Heart left ventricle (tissue), 16 donors: ENCODE measurements at regions of chr7 and their contacts with region 1.

Region 1: DNA sequence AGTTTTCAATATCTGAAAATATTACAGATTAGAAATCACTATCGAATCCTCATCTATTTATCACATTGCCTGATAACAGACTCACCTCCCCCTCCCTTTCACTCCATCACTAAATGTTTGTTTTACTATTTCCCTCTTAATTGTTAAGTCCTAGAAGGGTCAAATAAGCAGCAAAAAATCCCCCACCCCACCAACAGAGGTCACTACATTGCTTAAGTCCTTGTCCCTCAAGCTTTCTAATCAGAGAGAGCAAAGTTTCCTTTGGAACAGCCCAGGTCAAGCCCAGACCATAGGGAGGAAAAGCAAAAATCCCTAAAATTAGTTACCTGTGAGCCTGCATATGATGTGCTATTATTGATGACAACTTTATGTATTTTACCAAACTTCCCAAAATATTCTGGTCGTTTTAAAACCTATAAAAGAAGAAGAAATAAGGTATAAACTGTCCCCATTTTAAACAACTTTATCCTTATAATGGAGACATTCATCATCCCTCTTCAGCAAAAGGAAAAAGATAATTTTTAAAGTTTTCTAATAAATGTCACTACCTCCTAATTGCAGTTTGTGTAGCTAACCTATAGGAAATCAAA is 95.0 kb downstream of the CNOT4 start:
- DNase-seq: peak in 1 of 5 donors; percentile 22
- ATAC-seq: no peak
- H3K4me3 ChIP-seq: no peak overlapping the region
- H3K27ac ChIP-seq: no peak overlapping the region
- H3K4me1 ChIP-seq: no peaks in the 10 kb centered on the region
- H3K27me3 ChIP-seq: no peaks in the 10 kb centered on the region
- CTCF ChIP-seq: peak in 9 of 12 donors; percentile 10 to 46 (median 40)
- POLR2A ChIP-seq: no peak

Region 2: DNA sequence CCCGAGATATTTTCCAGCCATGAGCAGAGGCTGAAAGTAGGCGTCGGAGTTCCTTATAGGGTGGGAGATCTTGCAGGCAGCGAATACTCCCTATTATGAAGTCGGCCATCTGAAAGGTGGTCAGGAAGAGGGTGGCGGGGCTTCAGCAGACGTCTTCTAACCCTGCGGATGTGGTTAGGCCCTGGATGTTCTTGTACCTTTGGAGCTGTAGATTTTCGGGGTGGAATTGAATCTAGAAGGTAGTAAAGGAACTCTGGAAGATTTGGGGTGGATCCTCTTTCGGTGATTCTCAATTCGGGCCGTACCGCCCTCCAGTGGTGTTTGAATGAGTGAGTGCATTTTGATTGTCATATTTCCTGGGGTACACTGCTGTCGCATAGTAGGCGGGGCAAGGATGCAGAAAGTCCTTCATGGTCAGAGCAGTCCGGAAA is 143.4 kb after region 1 on chr7:
- intact Hi-C with region 1: loop called in 2 of 10 experiments (anchors 10 kb)
- DNase-seq: peak in 4 of 5 donors; percentile 33 to 58 (median 41)
- ATAC-seq: peak; percentile 52 to 78 (median 71)
- H3K4me3 ChIP-seq: peak overlapping the region; percentile 67 to 98 (median 88)
- H3K27ac ChIP-seq: peak overlapping the region; percentile 92 to 100 (median 96)
- H3K4me1 ChIP-seq: peaks cover 0 to 33% (median 9%) of the 10 kb centered on the region in 12 donors
- H3K27me3 ChIP-seq: no peaks in the 10 kb centered on the region
- CTCF ChIP-seq: peak; percentile 13 to 68 (median 54)
- POLR2A ChIP-seq: no peak